Activated T-helper 1 cell treated with anti-CD3 and anti-CD28 coated beads, Interleukin-12 subunit alpha, Interleukin-12 subunit beta, Interleukin-2, Interleukin-4 antibody, amounts not matched to agents 30 ng/mL and 10 ng/mL and 1 ng/mL, durations not matched to agents 14 hours and 24 hours and 36 hours (primary cell): ENCODE measurements at regions of chr12 and their contacts with region 1.

Region 1: GRCh38 chr12:7959701-7960121 is 23.7 kb upstream of the SLC2A3 start:
- DNase-seq: peak; percentile 56
- H3K4me3 Mint-ChIP-seq: peak overlapping the region; percentile 92
- H3K27ac Mint-ChIP-seq: peak overlapping the region; percentile 97
- H3K4me1 Mint-ChIP-seq: peaks cover 52% of the 10 kb centered on the region
- H3K27me3 Mint-ChIP-seq: no peaks in the 10 kb centered on the region

Region 2: GRCh38 chr12:7970475-7971252 is 11.0 kb after region 1 on chr12:
- intact Hi-C with region 1: loop called (anchors 1 kb)
- DNase-seq: peak; percentile 85
- H3K4me3 Mint-ChIP-seq: peak overlapping the region; percentile 98
- H3K27ac Mint-ChIP-seq: peak overlapping the region; percentile 100
- H3K4me1 Mint-ChIP-seq: peaks cover 40% of the 10 kb centered on the region
- H3K27me3 Mint-ChIP-seq: no peaks in the 10 kb centered on the region

Region 3: DNA sequence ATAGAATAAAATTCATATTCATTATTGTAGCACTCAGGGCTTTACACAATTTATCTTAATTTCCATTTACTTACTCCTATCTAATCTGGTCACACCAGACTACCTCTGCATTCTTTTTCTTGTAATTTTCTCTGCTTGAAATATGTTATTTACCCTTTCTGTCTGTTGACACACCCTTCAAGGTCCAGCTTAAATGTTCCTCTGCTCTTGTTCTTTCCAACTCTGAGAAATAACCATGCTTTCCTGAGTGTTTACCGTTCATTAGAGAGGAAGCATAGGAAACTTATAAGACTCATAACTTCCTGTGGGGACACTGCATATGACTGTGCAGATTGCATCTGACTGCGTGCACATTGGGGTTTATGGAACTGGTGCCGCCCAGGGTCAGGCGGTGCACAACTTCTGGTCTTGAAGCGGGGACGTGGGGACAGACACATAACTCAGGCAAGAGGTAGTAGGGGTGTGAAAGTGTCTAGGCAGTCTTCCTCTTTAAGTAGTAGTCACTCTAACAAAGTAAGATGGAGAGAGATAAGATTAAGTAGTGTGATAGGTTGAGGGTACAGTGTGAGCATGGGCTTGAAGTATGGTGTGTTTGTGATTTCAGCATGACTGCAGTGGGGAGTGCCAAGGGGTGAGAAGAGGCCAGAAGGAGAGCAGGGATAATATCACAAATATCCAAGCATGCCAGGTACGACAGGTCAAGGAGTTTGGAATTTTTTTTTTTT is 30.3 kb after region 1 on chr12:
- intact Hi-C with region 1: loop called (anchors 1 kb)
- DNase-seq: peak; percentile 76
- H3K4me3 Mint-ChIP-seq: peak overlapping the region; percentile 54
- H3K27ac Mint-ChIP-seq: peak overlapping the region; percentile 93
- H3K4me1 Mint-ChIP-seq: peaks cover 32% of the 10 kb centered on the region
- H3K27me3 Mint-ChIP-seq: no peaks in the 10 kb centered on the region

Region 4: GRCh38 chr12:8026291-8026900 is 66.7 kb after region 1 on chr12:
- intact Hi-C with region 1: loop called (anchors 1 kb)
- DNase-seq: peak; percentile 96
- H3K4me3 Mint-ChIP-seq: peak overlapping the region; percentile 93
- H3K27ac Mint-ChIP-seq: peak overlapping the region; percentile 99
- H3K4me1 Mint-ChIP-seq: peaks cover 19% of the 10 kb centered on the region
- H3K27me3 Mint-ChIP-seq: no peaks in the 10 kb centered on the region

Region 5: DNA sequence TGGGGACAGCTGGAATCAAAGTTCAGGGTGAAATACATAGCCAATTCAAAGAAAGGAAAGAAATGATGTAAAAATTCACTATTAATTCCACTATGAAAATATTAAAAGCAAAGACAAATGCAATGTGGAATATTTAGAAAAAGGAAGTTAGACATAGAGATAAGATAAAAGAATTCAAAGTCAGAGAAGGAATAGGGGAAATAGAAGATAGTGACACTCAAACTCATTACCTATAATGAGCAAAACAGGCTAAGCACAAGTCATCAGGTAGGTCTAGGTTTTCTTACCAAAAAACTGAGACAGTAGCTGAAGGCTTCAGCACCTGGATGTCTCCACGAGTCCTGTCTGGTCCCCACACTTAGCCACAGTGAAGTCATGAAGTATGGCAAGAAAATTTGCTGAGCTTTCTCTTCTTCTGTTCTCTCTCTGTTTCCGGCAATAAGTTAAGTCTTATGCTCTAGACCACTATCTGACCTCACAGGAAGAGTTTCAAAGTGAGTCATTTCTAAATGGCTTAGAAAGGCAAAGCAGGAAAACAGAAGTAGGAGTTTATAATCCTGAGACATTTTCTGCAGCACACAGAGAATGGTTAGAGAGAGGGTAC is 106.4 kb after region 1 on chr12 and contains the start of gene C3AR1:
- intact Hi-C with region 1: no loop called
- DNase-seq: peak; percentile 43
- H3K4me3 Mint-ChIP-seq: peak within 1 kb of the TSS; percentile 56
- H3K27ac Mint-ChIP-seq: peak within 1 kb of the TSS; percentile 79
- H3K4me1 Mint-ChIP-seq: peaks cover 35% of the 10 kb centered on the region
- H3K27me3 Mint-ChIP-seq: no peaks in the 10 kb centered on the region
- total RNA-seq, gene C3AR1: 0.60 and 0.71 TPM in 2 replicates